H1 (cell line): ENCODE measurements at regions of chr3 and their contacts with region 1.

Region 1: DNA sequence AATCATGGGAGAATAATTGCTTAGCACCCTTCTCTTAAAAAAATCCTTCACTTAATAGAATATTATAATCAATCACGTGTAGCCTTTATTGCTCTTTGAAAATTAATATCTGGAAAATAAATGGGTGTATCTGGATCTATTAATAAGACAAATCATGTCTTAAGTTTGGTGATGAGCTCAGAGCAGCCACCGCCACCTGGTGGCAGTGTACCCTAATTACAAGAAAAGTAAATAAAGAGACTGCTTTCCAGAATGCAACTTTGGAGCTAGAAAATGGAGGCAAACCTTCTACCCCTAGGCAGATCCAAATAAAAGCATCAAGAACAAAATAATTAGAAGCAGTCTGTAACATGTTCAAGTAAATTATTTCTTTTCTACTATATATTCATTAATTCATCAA is 43.5 kb downstream of the EPHB1 start:
- DNase-seq: no peak
- H3K4me3 ChIP-seq: no peak overlapping the region
- H3K27ac ChIP-seq: no peak overlapping the region
- H3K4me1 ChIP-seq: no peaks in the 10 kb centered on the region
- H3K27me3 ChIP-seq: no peaks in the 10 kb centered on the region
- CTCF ChIP-seq: peak in 2 of 3 experiments; percentile 39 to 45; a peak in 2 of 4 replicates
- EP300 ChIP-seq: no peak
- POLR2A ChIP-seq: no peak
- RAD21 ChIP-seq: peak; percentile 49 to 64

Region 2: GRCh38 chr3:134260984-134261383 is 577.6 kb before region 1 on chr3:
- CTCF ChIA-PET with region 1: no interaction called
- POLR2A ChIA-PET with region 1: no interaction called
- DNase-seq: peak; percentile 46 to 51
- H3K4me3 ChIP-seq: peak overlapping the region in 1 of 4 experiments; percentile 26; a peak in 1 of 8 replicates
- H3K27ac ChIP-seq: no peak overlapping the region; the same call in 1 of the 2 replicates
- H3K4me1 ChIP-seq: peaks cover 2 to 5% (median 2%) of the 10 kb centered on the region in 4 experiments; a peak in 3 of 7 replicates
- H3K27me3 ChIP-seq: no peaks in the 10 kb centered on the region
- CTCF ChIP-seq: no peak
- EP300 ChIP-seq: peak in 1 of 2 experiments; percentile 60; a peak in 1 of 3 replicates
- POLR2A ChIP-seq: no peak
- RAD21 ChIP-seq: no peak

Region 3: GRCh38 chr3:134729649-134730048 is 109.0 kb before region 1 on chr3:
- CTCF ChIA-PET with region 1: no interaction called
- POLR2A ChIA-PET with region 1: no interaction called
- DNase-seq: no peak
- H3K4me3 ChIP-seq: no peak overlapping the region
- H3K27ac ChIP-seq: no peak overlapping the region
- H3K4me1 ChIP-seq: no peaks in the 10 kb centered on the region
- H3K27me3 ChIP-seq: no peaks in the 10 kb centered on the region
- CTCF ChIP-seq: no peak
- EP300 ChIP-seq: no peak
- POLR2A ChIP-seq: no peak
- RAD21 ChIP-seq: no peak

Region 4: GRCh38 chr3:134817297-134817696 is 21.3 kb before region 1 on chr3:
- CTCF ChIA-PET with region 1: interaction called, 23 read pairs
- POLR2A ChIA-PET with region 1: no interaction called
- DNase-seq: no peak
- H3K4me3 ChIP-seq: no peak overlapping the region
- H3K27ac ChIP-seq: no peak overlapping the region
- H3K4me1 ChIP-seq: peaks cover 0 to 4% (median 1%) of the 10 kb centered on the region in 4 experiments; a peak in 4 of 7 replicates
- H3K27me3 ChIP-seq: no peaks in the 10 kb centered on the region
- CTCF ChIP-seq: no peak
- EP300 ChIP-seq: no peak
- POLR2A ChIP-seq: no peak
- RAD21 ChIP-seq: no peak

Region 5: GRCh38 chr3:134824791-134825190 is 13.8 kb before region 1 on chr3:
- CTCF ChIA-PET with region 1: interaction called, 29 read pairs
- POLR2A ChIA-PET with region 1: no interaction called
- DNase-seq: no peak
- H3K4me3 ChIP-seq: no peak overlapping the region
- H3K27ac ChIP-seq: no peak overlapping the region
- H3K4me1 ChIP-seq: peaks cover 0 to 2% (median 0%) of the 10 kb centered on the region in 4 experiments; a peak in 1 of 7 replicates
- H3K27me3 ChIP-seq: no peaks in the 10 kb centered on the region; a peak in 1 of 7 replicates
- CTCF ChIP-seq: no peak
- EP300 ChIP-seq: no peak
- POLR2A ChIP-seq: no peak
- RAD21 ChIP-seq: no peak

Region 6: DNA sequence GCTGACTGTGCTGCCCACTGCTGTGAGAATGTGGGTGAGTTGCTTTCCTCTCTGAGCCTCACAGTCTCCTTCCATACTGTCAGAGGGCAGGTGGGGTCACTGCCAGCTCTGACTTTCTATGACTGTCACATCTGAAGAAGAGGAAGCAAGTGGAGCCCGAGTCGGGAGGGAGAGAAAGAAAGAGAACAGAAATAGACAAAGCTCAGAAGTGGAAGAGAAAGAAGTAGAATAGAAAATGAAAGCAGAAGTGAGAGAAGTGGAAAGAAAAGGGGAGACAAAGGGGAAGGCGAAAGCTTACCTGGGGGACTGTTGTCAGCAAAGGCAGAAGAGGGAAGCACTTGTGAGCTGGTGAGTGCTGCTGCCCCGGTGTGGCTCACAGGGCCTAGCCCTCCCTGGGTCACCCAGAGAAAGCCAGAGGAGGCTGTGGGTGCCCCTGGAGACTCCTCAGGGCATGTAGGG is 14.3 kb after region 1 on chr3:
- CTCF ChIA-PET with region 1: interaction called, 31 read pairs
- POLR2A ChIA-PET with region 1: no interaction called
- DNase-seq: no peak
- H3K4me3 ChIP-seq: no peak overlapping the region
- H3K27ac ChIP-seq: no peak overlapping the region
- H3K4me1 ChIP-seq: peaks cover 0 to 7% (median 3%) of the 10 kb centered on the region in 4 experiments; a peak in 2 of 7 replicates
- H3K27me3 ChIP-seq: no peaks in the 10 kb centered on the region
- CTCF ChIP-seq: no peak
- EP300 ChIP-seq: no peak
- POLR2A ChIP-seq: no peak
- RAD21 ChIP-seq: no peak

Region 7: DNA sequence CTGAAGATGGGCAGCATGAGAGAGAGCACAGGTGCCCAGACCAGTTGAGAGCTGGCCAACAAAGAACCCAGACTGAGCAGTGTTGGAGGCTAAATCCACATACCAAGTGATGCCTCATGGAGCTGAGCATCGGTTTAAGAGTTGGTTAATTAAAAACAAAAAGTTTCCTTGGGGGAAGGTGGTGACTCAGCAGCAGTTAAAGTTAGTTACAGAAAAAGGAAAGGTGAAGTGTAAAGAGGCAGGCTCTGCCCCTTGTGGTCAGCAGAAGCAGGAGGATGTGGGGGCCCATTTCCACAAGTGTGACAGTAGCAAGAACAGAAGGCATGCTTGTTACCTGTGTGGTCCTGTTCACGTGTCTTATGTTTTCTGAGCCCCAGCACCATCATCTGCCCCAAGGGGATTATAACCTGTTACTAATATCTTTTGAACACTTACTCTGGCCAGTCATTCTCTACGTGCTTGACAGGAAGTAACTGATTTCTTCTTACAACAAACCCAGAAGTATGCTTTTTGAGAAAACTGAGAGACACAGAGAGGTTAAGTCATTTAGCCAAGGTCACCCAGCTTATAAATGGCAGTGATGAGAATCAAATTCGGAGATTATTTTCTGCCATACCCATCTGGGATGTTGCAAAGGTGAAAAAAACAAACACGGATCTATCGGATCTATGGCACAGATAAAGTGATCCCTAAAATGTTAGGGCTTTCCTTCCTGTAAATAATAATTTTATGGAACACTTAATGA is 47.5 kb after region 1 on chr3:
- CTCF ChIA-PET with region 1: interaction called, 14 read pairs
- POLR2A ChIA-PET with region 1: no interaction called
- DNase-seq: peak in 1 of 2 experiments; percentile 15
- H3K4me3 ChIP-seq: no peak overlapping the region
- H3K27ac ChIP-seq: no peak overlapping the region
- H3K4me1 ChIP-seq: peaks cover 0 to 2% (median 0%) of the 10 kb centered on the region in 4 experiments; a peak in 1 of 7 replicates
- H3K27me3 ChIP-seq: peaks cover 1 to 3% (median 2%) of the 10 kb centered on the region in 4 experiments; a peak in 6 of 7 replicates
- CTCF ChIP-seq: peak; percentile 23 to 72 (median 65); a peak in 3 of 4 replicates
- EP300 ChIP-seq: no peak
- POLR2A ChIP-seq: no peak
- RAD21 ChIP-seq: peak; percentile 33 to 52; a peak in 3 of 4 replicates

Region 8: DNA sequence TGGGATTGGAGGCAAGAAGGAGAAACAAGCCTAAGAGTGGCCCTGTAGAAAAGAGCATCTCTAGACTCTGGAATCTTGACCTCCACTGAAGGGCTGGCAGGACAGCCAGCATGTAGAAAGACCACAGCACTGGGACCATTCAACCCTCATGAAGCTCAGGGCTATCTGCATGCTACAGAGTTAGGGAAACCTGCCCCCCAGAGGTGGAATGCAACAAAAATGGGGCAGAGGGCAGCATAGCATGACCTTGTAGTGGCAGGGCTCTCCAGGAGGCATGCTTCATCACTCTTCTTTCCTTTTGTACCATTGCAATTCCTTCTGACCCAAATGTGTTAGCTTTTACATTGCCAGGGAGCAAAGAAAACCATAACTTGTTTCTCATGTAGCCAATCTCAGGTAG is 401.8 kb after region 1 on chr3:
- CTCF ChIA-PET with region 1: interaction called, 14 read pairs
- POLR2A ChIA-PET with region 1: no interaction called
- DNase-seq: no peak
- H3K4me3 ChIP-seq: no peak overlapping the region
- H3K27ac ChIP-seq: no peak overlapping the region
- H3K4me1 ChIP-seq: peaks cover 0 to 7% (median 0%) of the 10 kb centered on the region in 4 experiments; a peak in 3 of 7 replicates
- H3K27me3 ChIP-seq: no peaks in the 10 kb centered on the region; a peak in 1 of 7 replicates
- CTCF ChIP-seq: peak; percentile 60 to 66 (median 64)
- EP300 ChIP-seq: no peak
- POLR2A ChIP-seq: no peak
- RAD21 ChIP-seq: peak; percentile 75 to 84